A549 (cell line): ENCODE measurements at regions of chr19 and their contacts with region 1.

Region 1: GRCh38 chr19:47436712-47437401 is 17.5 kb upstream of the MEIS3 start:
- DNase-seq: peak; percentile 82 to 86
- ATAC-seq: peak; percentile 84 to 95
- H3K4me3 ChIP-seq: no peak overlapping the region
- H3K27ac ChIP-seq: no peak overlapping the region
- H3K4me1 ChIP-seq: no peaks in the 10 kb centered on the region
- CTCF ChIP-seq: peak; percentile 92
- EP300 ChIP-seq: no peak
- POLR2A ChIP-seq: no peak
- RAD21 ChIP-seq: peak; percentile 96 to 99

Region 2: GRCh38 chr19:47305309-47305751 is 131.5 kb before region 1 on chr19:
- CTCF ChIA-PET with region 1: interaction called, 10 read pairs
- POLR2A ChIA-PET with region 1: no interaction called
- DNase-seq: peak; percentile 86 to 92
- ATAC-seq: peak; percentile 74 to 75
- H3K4me3 ChIP-seq: no peak overlapping the region
- H3K27ac ChIP-seq: peak overlapping the region; percentile 60 to 71
- H3K4me1 ChIP-seq: peaks cover 29% of the 10 kb centered on the region
- CTCF ChIP-seq: peak; percentile 99
- EP300 ChIP-seq: no peak
- POLR2A ChIP-seq: no peak
- RAD21 ChIP-seq: peak; percentile 58 to 62

Region 3: DNA sequence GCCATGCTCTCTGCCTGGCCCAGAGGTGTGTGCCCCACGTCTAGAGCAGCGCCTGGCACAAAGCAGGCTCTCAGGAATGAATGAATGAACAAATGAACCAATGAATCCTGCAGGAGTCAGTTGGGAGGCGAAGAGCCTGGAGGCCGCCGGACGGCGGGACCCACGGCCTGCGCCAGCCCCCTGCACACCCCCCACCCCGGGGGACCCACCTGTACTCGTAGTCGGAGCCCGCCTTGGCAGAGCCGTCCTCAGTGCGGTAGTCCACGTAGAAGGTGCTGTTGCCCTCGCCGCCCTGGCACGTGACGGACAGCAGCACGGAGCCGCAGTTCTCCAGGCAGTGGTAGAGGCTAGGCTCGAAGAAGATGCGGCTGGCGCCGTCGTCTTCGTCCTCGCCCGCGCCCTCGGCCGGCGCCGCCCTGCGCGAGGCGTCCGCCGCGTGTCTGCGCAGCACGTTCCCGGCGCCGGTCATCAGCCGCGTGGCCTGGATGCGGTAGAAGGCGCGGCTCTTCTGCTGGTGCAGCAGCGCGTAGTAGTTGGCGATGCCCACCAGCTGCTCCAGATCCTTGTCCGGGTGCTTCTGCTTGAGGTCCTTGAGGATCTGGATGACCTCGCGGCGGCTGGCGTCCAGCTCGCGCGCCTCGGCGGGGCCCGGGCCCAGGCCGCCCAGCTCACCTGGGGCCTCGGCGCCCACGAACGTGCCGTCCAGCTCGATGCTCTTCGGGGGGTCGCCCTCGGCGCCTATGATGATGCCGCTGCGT is 20.0 kb after region 1 on chr19:
- CTCF ChIA-PET with region 1: interaction called, 44 read pairs
- POLR2A ChIA-PET with region 1: no interaction called
- DNase-seq: no peak
- ATAC-seq: peak; percentile 19 to 24; a peak in 4 of 6 replicates
- H3K4me3 ChIP-seq: peak overlapping the region; percentile 24; the same call in 2 of the 3 replicates
- H3K27ac ChIP-seq: no peak overlapping the region
- H3K4me1 ChIP-seq: no peaks in the 10 kb centered on the region
- CTCF ChIP-seq: no peak
- EP300 ChIP-seq: no peak
- POLR2A ChIP-seq: no peak
- RAD21 ChIP-seq: no peak

Region 4: DNA sequence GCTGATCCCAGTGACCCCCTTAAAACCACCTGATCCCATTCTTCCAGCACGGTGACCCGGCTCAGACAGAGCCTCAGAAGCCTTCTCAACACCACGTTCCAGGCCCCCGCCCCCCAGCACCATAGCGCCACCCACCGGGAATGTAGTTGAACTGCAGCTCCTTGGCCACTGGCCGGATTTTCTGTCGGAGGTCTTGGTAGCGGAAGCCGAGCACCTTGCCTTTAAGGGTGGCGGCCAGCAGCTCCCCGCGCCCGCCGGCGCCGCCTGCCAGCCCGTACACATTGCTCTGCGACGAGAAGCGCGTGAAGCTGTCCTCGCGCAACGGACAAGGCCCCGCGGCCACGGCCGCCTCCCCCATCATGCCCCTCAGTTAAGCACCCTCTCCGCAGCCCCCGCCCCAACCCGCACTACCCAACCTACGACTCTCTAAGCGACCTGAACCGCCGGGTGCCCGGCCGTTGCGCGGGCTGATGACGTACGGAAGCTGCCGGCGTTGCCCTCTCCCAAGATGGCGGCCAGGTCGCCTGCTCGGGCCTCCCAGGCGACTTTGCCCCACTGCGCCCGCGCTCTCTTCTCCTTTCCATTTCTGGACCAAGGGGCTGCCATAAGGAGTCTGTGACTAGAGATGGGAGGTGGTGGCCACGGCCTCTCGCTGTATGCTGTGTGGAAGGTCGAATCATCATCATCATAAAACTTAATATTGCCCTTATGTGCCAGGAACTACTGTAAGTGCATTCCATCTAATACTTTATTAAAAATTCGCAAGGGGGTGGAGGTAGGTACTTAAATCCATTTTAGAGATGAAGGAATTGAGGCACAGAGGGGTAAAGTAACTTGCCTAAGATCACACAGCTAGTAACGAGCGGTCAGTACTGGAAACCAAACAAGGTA is 47.2 kb after region 1 on chr19 and contains the start of gene KPTN:
- CTCF ChIA-PET with region 1: interaction called, 84 read pairs
- POLR2A ChIA-PET with region 1: interaction called, 15 read pairs
- DNase-seq: peak; percentile 96 to 99
- ATAC-seq: peak; percentile 84 to 90
- H3K4me3 ChIP-seq: peak within 1 kb of the TSS; percentile 53
- H3K27ac ChIP-seq: peak within 1 kb of the TSS; percentile 96 to 97
- H3K4me1 ChIP-seq: peaks cover 12% of the 10 kb centered on the region; the same call in 2 of the 3 replicates
- CTCF ChIP-seq: peak; percentile 98
- EP300 ChIP-seq: no peak
- POLR2A ChIP-seq: peak; percentile 88
- RAD21 ChIP-seq: peak; percentile 70 to 75
- polyA plus RNA-seq, gene KPTN: 10.6 and 12.5 TPM in 2 replicates

Region 5: GRCh38 chr19:47514869-47515588 is 78.2 kb after region 1 on chr19 and contains the start of gene NAPA:
- CTCF ChIA-PET with region 1: interaction called, 78 read pairs
- POLR2A ChIA-PET with region 1: no interaction called
- DNase-seq: peak; percentile 100
- ATAC-seq: peak; percentile 87 to 96
- H3K4me3 ChIP-seq: peak within 1 kb of the TSS; percentile 89
- H3K27ac ChIP-seq: peak within 1 kb of the TSS; percentile 90 to 92
- H3K4me1 ChIP-seq: peaks cover 28% of the 10 kb centered on the region
- CTCF ChIP-seq: no peak
- EP300 ChIP-seq: no peak
- POLR2A ChIP-seq: peak; percentile 67
- RAD21 ChIP-seq: peak; percentile 64 to 79; a peak in 4 of 5 replicates
- polyA plus RNA-seq, gene NAPA: 69.6 and 74.3 TPM in 2 replicates

Region 6: DNA sequence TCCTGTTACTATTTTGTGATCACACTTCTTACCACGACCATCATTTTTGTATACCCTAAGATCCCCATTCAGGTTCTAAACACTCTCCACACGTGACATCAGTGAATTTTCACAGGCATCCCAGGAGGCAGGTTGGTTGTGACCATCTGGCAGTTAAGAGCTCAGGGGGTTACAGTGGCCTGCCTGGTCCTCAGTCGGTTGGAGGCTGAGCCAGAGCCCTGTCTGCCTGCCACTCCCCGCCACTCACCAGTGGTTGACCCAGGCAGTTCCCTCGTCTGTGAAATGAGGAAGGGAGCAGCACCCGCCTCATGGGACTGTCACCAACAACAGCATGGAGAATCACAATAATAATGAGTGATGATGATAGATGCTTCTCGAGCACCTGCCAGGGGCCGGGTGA is 240.0 kb after region 1 on chr19:
- CTCF ChIA-PET with region 1: interaction called, 15 read pairs
- POLR2A ChIA-PET with region 1: no interaction called
- DNase-seq: no peak
- ATAC-seq: no peak
- H3K4me3 ChIP-seq: no peak overlapping the region
- H3K27ac ChIP-seq: no peak overlapping the region
- H3K4me1 ChIP-seq: no peaks in the 10 kb centered on the region
- CTCF ChIP-seq: no peak
- EP300 ChIP-seq: no peak
- POLR2A ChIP-seq: no peak
- RAD21 ChIP-seq: no peak

Region 7: DNA sequence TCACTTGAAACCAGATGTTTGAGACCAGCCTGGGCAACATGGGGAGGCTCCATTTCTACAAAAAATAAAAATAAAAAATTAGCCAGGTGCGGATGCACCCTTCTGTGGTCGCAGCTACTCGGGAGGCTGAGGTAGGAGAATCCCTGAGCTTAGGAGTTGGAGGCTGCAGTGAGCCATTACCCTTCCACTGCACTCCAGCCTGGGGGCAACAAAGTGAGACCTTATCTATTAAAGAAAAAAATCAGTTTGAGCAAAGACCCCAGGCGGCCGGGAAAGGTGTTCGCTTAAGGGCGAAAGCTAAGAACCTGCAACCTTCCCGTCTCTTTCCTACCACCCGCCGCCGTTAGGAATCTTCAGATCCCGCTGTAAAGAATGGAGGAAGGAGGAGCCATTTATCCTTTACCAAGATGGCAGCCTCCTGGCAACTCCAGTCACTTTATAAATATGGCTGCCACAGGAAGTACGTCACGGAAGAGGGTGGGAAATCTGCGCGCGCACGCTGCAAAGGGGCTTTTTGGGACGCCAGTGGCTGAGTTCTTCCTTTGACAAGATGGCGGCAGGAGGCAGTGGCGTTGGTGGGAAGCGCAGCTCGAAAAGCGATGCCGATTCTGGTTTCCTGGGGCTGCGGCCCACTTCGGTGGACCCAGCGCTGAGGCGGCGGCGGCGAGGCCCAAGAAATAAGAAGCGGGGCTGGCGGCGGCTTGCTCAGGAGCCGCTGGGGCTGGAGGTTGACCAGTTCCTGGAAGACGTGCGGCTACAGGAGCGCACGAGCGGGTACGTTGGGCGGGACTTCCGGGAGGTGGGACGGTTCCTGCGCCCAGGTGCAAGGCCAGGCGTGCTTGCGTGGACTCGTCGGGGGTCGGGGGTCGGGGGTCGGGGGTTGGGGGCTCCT is 308.4 kb after region 1 on chr19 and contains the start of gene NOP53:
- CTCF ChIA-PET with region 1: interaction called, 45 read pairs
- POLR2A ChIA-PET with region 1: interaction called, 3 read pairs
- DNase-seq: peak; percentile 99
- ATAC-seq: peak; percentile 64 to 75
- H3K4me3 ChIP-seq: peak within 1 kb of the TSS; percentile 56
- H3K27ac ChIP-seq: peak within 1 kb of the TSS; percentile 95 to 96
- H3K4me1 ChIP-seq: peaks cover 33% of the 10 kb centered on the region
- CTCF ChIP-seq: no peak
- EP300 ChIP-seq: no peak
- POLR2A ChIP-seq: peak; percentile 76
- RAD21 ChIP-seq: no peak
- polyA plus RNA-seq, gene NOP53: 169 and 182 TPM in 2 replicates